Endothelial cell of umbilical vein (primary cell): ENCODE measurements at regions of chr1 and their contacts with region 1.

Region 1: DNA sequence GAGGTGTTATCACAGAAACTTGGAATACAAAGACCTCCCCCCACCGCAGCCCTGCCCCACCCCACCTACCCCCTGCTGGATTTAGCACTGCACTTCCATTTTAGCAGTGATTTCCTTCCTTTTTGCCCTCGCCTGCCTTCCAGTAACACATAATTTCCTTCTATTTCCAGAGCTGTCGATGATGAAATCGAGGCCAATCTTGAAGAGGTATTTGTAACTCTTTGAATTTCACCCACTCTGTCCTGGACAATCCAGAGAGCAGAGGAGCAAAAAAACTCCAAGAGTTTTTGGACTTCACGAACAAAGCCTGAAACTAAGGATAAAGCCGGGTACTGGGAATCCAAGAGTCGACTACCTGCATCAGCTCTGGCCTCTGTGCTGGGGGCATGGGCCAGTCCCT is 49.1 kb downstream of the CAPN2 start:
- DNase-seq: no peak
- H3K4me3 ChIP-seq: no peak overlapping the region
- H3K27ac ChIP-seq: no peak overlapping the region
- H3K4me1 ChIP-seq: no peaks in the 10 kb centered on the region
- H3K27me3 ChIP-seq: no peaks in the 10 kb centered on the region
- CTCF ChIP-seq: no peak
- POLR2A ChIP-seq: no peak

Region 2: DNA sequence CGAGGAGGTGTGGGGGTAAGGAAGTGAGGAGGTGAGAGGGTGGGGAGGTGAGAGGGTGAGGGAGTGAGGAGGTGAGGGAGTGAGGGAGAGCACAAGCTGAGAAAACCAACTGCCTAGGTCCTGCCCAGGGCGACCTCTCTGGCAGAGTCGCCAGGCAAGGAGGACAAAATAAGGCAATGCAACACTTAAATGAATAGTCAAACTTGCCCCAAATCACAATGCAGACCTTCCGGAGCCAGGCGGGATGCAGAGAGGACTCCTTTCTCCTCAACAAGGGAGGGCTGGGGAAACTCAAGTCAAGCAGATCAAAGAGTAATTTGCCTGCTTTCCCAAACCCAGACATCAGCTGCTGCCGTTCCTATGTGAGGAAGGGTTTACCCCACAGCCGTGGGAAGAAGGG is 282.1 kb before region 1 on chr1:
- CTCF ChIA-PET with region 1: no interaction called
- POLR2A ChIA-PET with region 1: no interaction called
- dilution Hi-C with region 1: no loop called
- intact Hi-C with region 1: no loop called
- DNase-seq: no peak
- H3K4me3 ChIP-seq: no peak overlapping the region
- H3K27ac ChIP-seq: no peak overlapping the region
- H3K4me1 ChIP-seq: no peaks in the 10 kb centered on the region
- H3K27me3 ChIP-seq: no peaks in the 10 kb centered on the region
- CTCF ChIP-seq: no peak
- POLR2A ChIP-seq: no peak

Region 3: DNA sequence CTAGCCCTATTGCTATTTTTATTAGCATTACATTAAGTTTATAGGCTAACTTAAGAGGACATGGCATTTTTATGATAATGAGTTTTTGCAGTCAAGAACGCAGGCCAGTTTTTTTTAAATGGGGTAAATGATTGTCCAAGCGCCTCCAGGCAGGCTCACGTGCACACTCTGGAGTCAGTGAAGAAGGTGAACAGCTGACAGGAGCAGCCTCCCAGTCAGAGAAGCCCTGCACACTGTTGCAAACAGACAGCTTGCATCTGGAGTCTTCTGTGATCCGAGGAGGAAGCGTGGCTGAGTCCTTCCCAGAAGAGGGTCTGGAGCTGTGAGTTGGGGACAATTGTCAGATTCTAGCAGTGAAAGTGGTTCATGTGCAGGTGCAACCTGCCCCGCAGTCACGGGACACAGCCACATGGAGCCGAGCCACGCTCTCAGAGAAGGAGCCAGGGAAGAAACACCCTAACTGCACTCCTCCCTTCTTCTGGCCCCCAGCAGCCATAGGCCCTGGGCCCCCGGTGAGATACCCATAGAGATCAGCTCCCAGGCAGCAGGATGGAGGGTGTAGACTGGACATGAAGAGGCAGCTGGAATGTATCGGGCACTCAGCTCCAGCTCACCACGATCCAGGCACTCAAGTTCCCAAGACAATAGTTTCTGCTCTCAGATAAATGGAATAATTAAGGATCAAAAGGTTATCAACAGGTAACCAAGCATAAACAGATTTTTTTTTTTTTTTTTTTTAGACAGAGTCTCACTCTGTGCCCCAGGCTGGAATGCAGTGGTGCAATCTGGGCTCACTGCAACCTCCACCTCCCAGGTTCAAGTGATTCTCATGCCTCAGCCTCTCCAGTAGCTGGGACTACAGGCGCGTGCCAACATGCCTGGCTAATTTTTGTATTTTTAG is 22.7 kb before region 1 on chr1:
- CTCF ChIA-PET with region 1: no interaction called
- POLR2A ChIA-PET with region 1: no interaction called
- dilution Hi-C with region 1: no loop called
- intact Hi-C with region 1: no loop called
- DNase-seq: no peak
- H3K4me3 ChIP-seq: no peak overlapping the region
- H3K27ac ChIP-seq: no peak overlapping the region
- H3K4me1 ChIP-seq: peaks cover 52% of the 10 kb centered on the region
- H3K27me3 ChIP-seq: no peaks in the 10 kb centered on the region
- CTCF ChIP-seq: no peak
- POLR2A ChIP-seq: no peak

Region 4: GRCh38 chr1:223771814-223772770 is 10.7 kb after region 1 on chr1:
- CTCF ChIA-PET with region 1: interaction called, 9 read pairs
- POLR2A ChIA-PET with region 1: no interaction called
- dilution Hi-C with region 1: no loop called
- intact Hi-C with region 1: loop called (anchors 2 kb)
- DNase-seq: peak; percentile 95
- H3K4me3 ChIP-seq: peak overlapping the region in 1 of 3 experiments; percentile 2
- H3K27ac ChIP-seq: peak overlapping the region; percentile 78
- H3K4me1 ChIP-seq: peaks cover 68% of the 10 kb centered on the region
- H3K27me3 ChIP-seq: no peaks in the 10 kb centered on the region
- CTCF ChIP-seq: no peak
- POLR2A ChIP-seq: no peak